Activated T-helper 1 cell treated with anti-CD3 and anti-CD28 coated beads, Interleukin-12 subunit alpha, Interleukin-12 subunit beta, Interleukin-2, Interleukin-4 antibody, amounts not matched to agents 30 ng/mL and 10 ng/mL and 1 ng/mL, durations not matched to agents 14 hours and 24 hours and 36 hours (primary cell): ENCODE measurements at regions of chrX and their contacts with region 1.

Region 1: GRCh38 chrX:15493118-15493962 is at the start of gene PIR:
- DNase-seq: peak; percentile 54
- H3K4me3 Mint-ChIP-seq: peak within 1 kb of the TSS; percentile 86
- H3K27ac Mint-ChIP-seq: peak within 1 kb of the TSS; percentile 65
- H3K4me1 Mint-ChIP-seq: peaks cover 21% of the 10 kb centered on the region
- H3K27me3 Mint-ChIP-seq: peaks cover 6% of the 10 kb centered on the region
- total RNA-seq, gene PIR: 4.3 and 4.9 TPM in 2 replicates

Region 2: DNA sequence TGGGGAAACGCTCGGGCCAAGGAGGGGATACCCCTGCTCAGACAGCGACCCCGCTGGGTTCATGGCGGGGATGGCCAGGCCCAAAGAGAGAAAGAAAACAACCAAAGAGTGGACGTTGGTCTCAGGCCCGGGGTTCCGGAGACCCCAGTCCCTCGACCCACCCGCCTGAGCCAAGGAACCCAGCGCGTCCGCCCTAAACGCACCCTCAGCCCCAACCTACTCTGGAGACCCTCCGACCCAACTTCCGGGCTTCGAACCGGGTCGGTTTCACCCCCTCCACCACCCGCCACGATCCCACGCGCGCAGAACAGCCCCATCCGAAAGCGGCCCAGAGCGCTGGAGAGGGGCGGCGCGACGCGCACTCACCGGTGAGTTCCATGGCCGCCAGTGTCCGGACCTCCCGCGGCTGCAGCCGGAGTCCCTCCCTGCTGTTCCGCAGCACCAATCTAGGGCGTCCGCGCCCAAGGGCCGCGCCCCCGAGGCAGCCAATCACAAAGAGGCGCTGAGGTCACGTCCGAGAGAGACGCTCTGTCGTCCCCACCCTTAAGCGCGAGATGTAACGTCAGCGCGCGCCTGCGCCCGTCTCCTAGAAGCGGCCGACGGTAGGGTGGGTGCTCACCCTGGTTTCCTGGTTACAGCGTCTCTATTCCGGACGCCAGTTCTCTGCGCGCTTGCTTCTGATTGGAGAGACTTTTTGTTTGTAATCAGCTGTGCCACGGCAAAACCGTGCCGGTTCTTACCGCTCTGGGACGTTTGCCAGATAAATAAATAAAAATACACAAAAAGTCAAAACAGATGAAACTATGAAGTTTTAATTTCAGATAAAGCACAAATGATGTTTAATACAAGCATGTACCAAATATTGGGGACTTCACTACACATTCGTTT is 158.0 kb before region 1 on chrX and contains the start of gene PIGA:
- intact Hi-C with region 1: loop called (anchors 2 kb)
- DNase-seq: peak; percentile 89
- H3K4me3 Mint-ChIP-seq: peak within 1 kb of the TSS; percentile 91
- H3K27ac Mint-ChIP-seq: peak within 1 kb of the TSS; percentile 88
- H3K4me1 Mint-ChIP-seq: peaks cover 14% of the 10 kb centered on the region
- H3K27me3 Mint-ChIP-seq: no peaks in the 10 kb centered on the region
- total RNA-seq, gene PIGA: 23.9 and 25.4 TPM in 2 replicates

Region 3: DNA sequence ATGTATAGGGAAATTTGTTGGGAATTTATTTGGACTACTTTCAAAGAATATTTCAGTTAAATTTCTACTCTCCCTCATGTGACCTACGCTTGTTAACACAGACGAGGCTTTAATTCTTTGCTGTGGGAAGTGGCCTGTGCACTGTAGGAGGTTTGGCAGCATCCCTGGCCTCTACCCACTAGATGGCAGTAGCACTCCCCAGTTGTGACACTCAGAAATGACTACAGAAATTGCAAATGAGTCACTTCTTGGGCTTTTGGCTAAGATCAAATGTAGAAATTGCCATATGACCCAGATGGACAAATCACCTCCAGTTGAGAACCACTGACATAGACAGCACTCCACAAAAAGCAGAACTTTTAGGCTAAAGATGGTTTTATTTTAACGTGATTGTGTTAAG is 22.3 kb before region 1 on chrX:
- intact Hi-C with region 1: loop called (anchors 1 kb)
- DNase-seq: peak; percentile 22
- H3K4me3 Mint-ChIP-seq: no peak overlapping the region
- H3K27ac Mint-ChIP-seq: no peak overlapping the region
- H3K4me1 Mint-ChIP-seq: peaks cover 6% of the 10 kb centered on the region
- H3K27me3 Mint-ChIP-seq: no peaks in the 10 kb centered on the region

Region 4: DNA sequence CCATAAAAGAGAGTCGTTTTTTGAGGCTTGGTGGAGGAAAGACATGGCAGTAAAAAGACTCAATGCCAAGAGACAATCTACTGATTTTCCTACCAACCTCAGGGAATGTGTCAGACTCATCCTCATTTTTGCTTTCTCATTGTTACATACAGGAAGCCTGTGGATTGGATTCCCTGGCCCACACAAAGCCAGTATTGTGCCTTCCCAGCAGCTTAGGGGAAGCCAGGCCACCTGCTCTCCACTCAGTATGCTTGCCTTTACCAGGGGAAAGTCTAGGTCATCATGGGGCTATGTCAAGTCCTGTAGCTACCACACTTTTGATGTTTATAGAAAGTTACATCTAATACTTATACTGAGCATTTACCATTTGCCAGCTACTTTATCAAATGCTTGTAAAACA is 18.2 kb after region 1 on chrX:
- intact Hi-C with region 1: no loop called
- DNase-seq: no peak
- H3K4me3 Mint-ChIP-seq: no peak overlapping the region
- H3K27ac Mint-ChIP-seq: no peak overlapping the region
- H3K4me1 Mint-ChIP-seq: no peaks in the 10 kb centered on the region
- H3K27me3 Mint-ChIP-seq: peaks cover 7% of the 10 kb centered on the region

Region 5: GRCh38 chrX:15564981-15565579 is 71.7 kb after region 1 on chrX:
- intact Hi-C with region 1: loop called (anchors 1 kb)
- DNase-seq: no peak
- H3K4me3 Mint-ChIP-seq: no peak overlapping the region
- H3K27ac Mint-ChIP-seq: no peak overlapping the region
- H3K4me1 Mint-ChIP-seq: no peaks in the 10 kb centered on the region
- H3K27me3 Mint-ChIP-seq: peaks cover 4% of the 10 kb centered on the region

Region 6: GRCh38 chrX:15645258-15645657 is 151.9 kb after region 1 on chrX:
- intact Hi-C with region 1: loop called (anchors 10 kb)
- DNase-seq: no peak
- H3K4me3 Mint-ChIP-seq: no peak overlapping the region
- H3K27ac Mint-ChIP-seq: no peak overlapping the region
- H3K4me1 Mint-ChIP-seq: peaks cover 11% of the 10 kb centered on the region
- H3K27me3 Mint-ChIP-seq: peaks cover 2% of the 10 kb centered on the region

Region 7: GRCh38 chrX:16695079-16695676 is 1201.8 kb after region 1 on chrX:
- intact Hi-C with region 1: loop called (anchors 2 kb)
- DNase-seq: peak; percentile 25
- H3K4me3 Mint-ChIP-seq: no peak overlapping the region
- H3K27ac Mint-ChIP-seq: no peak overlapping the region
- H3K4me1 Mint-ChIP-seq: no peaks in the 10 kb centered on the region
- H3K27me3 Mint-ChIP-seq: no peaks in the 10 kb centered on the region